Caco-2 (cell line): ENCODE measurements at regions of chr15 and their contacts with region 1.

Region 1: GRCh38 chr15:48352474-48353072 is 21.3 kb downstream of the DUT start:
- DNase-seq: peak; percentile 62
- H3K4me3 ChIP-seq: no peak overlapping the region
- H3K4me3 Mint-ChIP-seq: no peak overlapping the region
- H3K27ac Mint-ChIP-seq: no peak overlapping the region
- H3K4me1 ChIP-seq: no peaks in the 10 kb centered on the region
- H3K4me1 Mint-ChIP-seq: peaks cover 13% of the 10 kb centered on the region
- H3K27me3 ChIP-seq: no peaks in the 10 kb centered on the region
- H3K27me3 Mint-ChIP-seq: no peaks in the 10 kb centered on the region
- CTCF ChIP-seq: peak; percentile 64 to 72

Region 2: DNA sequence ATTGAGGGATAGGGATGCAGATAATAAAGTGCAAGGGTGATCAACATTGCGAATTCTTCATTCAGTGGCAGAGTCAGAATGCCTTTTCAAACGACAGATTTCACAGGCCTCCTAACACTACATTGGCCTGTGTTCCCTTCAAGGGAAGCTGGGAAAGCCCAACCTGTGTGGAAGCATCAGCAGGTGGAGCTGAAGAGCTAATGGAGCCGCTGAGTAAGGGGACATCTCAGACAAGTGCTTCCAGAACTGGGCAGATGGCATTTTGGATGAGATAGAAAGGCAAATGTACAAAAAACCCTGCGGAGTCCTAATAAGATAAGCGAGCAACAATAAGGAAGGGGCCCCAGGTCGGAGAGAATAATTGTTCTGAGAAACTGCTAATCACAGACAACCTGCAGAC is 240.3 kb before region 1 on chr15:
- CTCF ChIA-PET with region 1: interaction called, 5 read pairs
- POLR2A ChIA-PET with region 1: no interaction called
- intact Hi-C with region 1: loop called (anchors 1 kb)
- DNase-seq: peak; percentile 45 to 53
- H3K4me3 ChIP-seq: no peak overlapping the region
- H3K4me3 Mint-ChIP-seq: no peak overlapping the region
- H3K27ac Mint-ChIP-seq: no peak overlapping the region
- H3K4me1 ChIP-seq: no peaks in the 10 kb centered on the region
- H3K4me1 Mint-ChIP-seq: no peaks in the 10 kb centered on the region
- H3K27me3 ChIP-seq: no peaks in the 10 kb centered on the region
- H3K27me3 Mint-ChIP-seq: peaks cover 22% of the 10 kb centered on the region
- CTCF ChIP-seq: peak; percentile 50 to 81

Region 3: GRCh38 chr15:48336940-48337339 is 15.6 kb before region 1 on chr15:
- CTCF ChIA-PET with region 1: interaction called, 13 read pairs
- POLR2A ChIA-PET with region 1: no interaction called
- intact Hi-C with region 1: loop called (anchors 1 kb)
- DNase-seq: peak in 1 of 2 experiments; percentile 26
- H3K4me3 ChIP-seq: no peak overlapping the region
- H3K4me3 Mint-ChIP-seq: no peak overlapping the region
- H3K27ac Mint-ChIP-seq: no peak overlapping the region
- H3K4me1 ChIP-seq: no peaks in the 10 kb centered on the region
- H3K4me1 Mint-ChIP-seq: peaks cover 8% of the 10 kb centered on the region
- H3K27me3 ChIP-seq: no peaks in the 10 kb centered on the region
- H3K27me3 Mint-ChIP-seq: no peaks in the 10 kb centered on the region
- CTCF ChIP-seq: peak; percentile 34 to 47

Region 4: GRCh38 chr15:48645558-48646330 is 293.2 kb after region 1 on chr15 and contains the start of gene FBN1:
- CTCF ChIA-PET with region 1: no interaction called
- POLR2A ChIA-PET with region 1: no interaction called
- intact Hi-C with region 1: loop called (anchors 10 kb)
- DNase-seq: peak in 1 of 2 experiments; percentile 8
- H3K4me3 ChIP-seq: peak within 1 kb of the TSS; percentile 24
- H3K4me3 Mint-ChIP-seq: peak within 1 kb of the TSS; percentile 49
- H3K27ac Mint-ChIP-seq: no peak within 1 kb of the TSS
- H3K4me1 ChIP-seq: no peaks in the 10 kb centered on the region
- H3K4me1 Mint-ChIP-seq: no peaks in the 10 kb centered on the region
- H3K27me3 ChIP-seq: no peaks in the 10 kb centered on the region
- H3K27me3 Mint-ChIP-seq: peaks cover 7% of the 10 kb centered on the region
- CTCF ChIP-seq: no peak
- total RNA-seq, gene FBN1: 0.21 and 0.43 TPM in 2 replicates

Region 5: DNA sequence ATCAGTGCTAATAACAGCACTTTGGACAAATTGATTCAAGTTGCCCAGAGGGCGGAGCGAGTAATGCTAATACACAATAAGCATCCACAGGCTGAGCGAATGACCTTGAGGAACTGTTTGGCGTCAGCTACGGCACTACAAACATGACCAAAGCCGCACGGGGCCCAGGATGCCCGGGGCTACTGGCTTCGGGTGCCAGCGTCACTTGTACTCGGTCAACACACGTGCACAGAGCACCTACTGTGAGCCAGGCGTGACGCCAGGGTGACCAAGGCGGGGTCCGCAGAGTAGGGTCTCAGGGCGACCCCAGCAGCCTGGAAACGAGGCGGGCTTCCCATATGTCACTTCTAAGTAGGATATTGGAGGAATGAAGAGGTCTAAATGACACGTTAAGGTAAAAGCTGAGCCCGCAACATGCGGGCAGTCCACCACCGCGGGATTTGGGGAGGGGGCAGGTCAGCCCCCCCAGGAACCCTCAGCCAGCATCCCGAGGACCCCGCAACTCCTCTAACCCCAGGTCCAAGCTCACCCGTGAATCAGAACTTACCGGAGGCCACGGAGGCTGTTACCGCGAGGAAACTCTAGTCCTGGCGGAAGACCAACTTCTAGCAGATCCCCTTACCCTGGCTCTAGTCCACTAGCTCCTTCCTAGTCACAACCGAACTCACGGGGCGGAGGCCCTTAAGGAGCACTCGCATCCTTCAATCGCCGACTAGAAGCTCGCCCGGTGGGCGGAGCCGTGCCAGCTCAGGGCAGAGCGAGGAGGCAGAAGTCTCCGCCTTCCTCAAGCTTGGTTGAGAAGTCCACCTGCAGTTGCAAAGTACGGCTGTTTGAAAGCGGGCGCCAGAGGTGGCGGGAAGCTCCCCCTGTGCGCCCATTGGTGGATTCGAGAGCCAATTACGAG is 458.1 kb after region 1 on chr15 and contains the start of gene CEP152:
- CTCF ChIA-PET with region 1: interaction called, 3 read pairs
- POLR2A ChIA-PET with region 1: no interaction called
- intact Hi-C with region 1: loop called (anchors 10 kb)
- DNase-seq: peak; percentile 98 to 99
- H3K4me3 ChIP-seq: peak within 1 kb of the TSS; percentile 69
- H3K4me3 Mint-ChIP-seq: peak within 1 kb of the TSS; percentile 80
- H3K27ac Mint-ChIP-seq: peak within 1 kb of the TSS; percentile 96
- H3K4me1 ChIP-seq: 0 out of 2 replicates have a peak, but pooled peaks cover 6% of the 10 kb centered on the region
- H3K4me1 Mint-ChIP-seq: peaks cover 19% of the 10 kb centered on the region
- H3K27me3 ChIP-seq: no peaks in the 10 kb centered on the region
- H3K27me3 Mint-ChIP-seq: peaks cover 3% of the 10 kb centered on the region
- CTCF ChIP-seq: no peak
- total RNA-seq, gene CEP152: 14.2 and 16.5 TPM in 2 replicates